BJ (cell line): ENCODE measurements at regions of chr4 and their contacts with region 1.

Region 1: GRCh38 chr4:39922389-39922788 is 55.3 kb downstream of the PDS5A start:
- DNase-seq: no peak
- H3K4me3 ChIP-seq: no peak overlapping the region
- H3K27me3 ChIP-seq: no peaks in the 10 kb centered on the region
- CTCF ChIP-seq: no peak

Region 2: DNA sequence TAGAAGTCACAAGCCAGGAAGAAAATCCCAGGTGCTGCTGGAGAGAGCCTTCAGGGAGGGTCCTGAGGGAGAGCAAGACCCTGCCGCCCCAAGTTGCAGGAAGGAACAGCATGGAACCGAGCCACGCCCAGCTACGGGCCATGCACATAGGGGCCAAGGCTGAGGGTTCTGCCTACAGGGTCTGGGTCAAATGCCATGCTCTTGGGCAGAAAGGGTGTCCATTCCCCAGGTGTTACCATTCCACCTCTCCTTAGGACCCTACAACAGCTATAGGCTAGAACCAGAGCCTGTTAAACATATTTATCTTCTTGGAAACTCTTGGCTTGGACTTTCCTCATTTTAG is 486.2 kb before region 1 on chr4:
- CTCF ChIA-PET with region 1: no interaction called
- POLR2A ChIA-PET with region 1: no interaction called
- DNase-seq: no peak
- H3K4me3 ChIP-seq: no peak overlapping the region
- H3K27me3 ChIP-seq: peaks cover 10% of the 10 kb centered on the region
- CTCF ChIP-seq: no peak

Region 3: GRCh38 chr4:40099010-40099409 is 176.6 kb after region 1 on chr4:
- CTCF ChIA-PET with region 1: no interaction called
- POLR2A ChIA-PET with region 1: interaction called, 13 read pairs
- DNase-seq: no peak
- H3K4me3 ChIP-seq: no peak overlapping the region
- H3K27me3 ChIP-seq: no peaks in the 10 kb centered on the region
- CTCF ChIP-seq: no peak

Region 4: DNA sequence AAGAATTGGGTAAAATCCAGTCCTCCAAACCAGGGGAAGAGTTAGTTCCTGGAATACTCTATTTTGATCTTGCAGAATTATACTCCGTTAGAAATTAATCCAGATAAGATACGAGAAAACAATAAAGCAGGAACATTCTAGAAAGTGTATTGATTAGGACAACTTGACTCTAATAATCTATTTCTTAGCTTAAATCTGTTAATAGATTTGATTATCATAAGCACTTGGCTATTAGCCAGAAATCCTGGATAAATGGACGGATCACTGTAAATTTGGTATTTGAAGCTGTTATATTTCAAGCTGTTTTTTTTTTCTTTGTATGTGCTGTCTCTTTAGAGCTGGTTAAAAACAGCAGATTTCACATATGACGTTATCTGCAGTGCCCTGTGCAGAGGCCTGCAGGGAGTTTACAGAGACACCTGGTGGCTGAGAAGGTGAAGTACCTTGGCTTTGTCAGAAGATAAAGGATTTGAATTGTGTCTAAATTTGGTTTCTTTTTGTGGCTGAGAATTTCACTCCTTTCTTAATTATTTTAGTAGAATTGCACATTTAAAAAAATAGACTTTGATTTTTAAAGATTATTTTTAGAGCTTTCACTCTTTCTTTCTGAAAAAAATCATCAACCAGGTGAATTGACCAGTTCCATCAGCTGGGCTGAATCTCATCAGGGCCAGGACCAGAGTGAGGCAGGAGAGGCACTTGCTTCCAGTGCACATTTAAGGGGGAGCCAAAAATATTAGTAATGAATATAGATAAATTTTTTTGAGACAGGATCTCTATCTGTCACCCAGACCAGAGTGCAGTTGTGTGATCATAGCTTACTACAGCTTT is 403.0 kb after region 1 on chr4:
- CTCF ChIA-PET with region 1: no interaction called
- POLR2A ChIA-PET with region 1: interaction called, 12 read pairs
- DNase-seq: no peak
- H3K4me3 ChIP-seq: no peak overlapping the region
- H3K27me3 ChIP-seq: peaks cover 2% of the 10 kb centered on the region; the same call in 1 of the 2 replicates
- CTCF ChIP-seq: peak; percentile 90